Breast epithelium (tissue), 4 donors: ENCODE measurements at regions of chr2 and their contacts with region 1.

Region 1: DNA sequence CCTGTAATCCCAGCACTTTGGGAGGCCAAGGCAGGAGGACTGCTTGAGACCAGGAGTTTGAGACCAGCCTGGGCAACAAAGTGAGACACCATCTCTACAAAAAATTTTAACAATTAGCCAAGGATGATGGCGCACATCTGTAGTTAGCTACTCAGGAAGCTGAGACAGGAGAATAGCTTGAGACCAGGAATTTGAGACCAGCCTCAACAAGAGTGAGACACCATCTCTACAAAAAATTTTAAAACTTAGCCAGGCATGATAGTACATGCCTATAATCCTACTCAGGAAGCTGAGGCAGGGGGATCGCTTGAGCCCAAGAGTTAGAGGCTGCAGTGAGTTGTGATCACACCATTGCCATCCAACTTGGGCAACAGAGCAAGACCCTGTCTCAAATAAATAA is 7.0 kb downstream of the MEMO1 start:
- DNase-seq: no peak
- H3K4me3 ChIP-seq: no peak overlapping the region
- H3K27ac ChIP-seq: no peak overlapping the region
- H3K4me1 ChIP-seq: peaks cover 0 to 4% of the 10 kb centered on the region in 2 donors
- H3K27me3 ChIP-seq: no peaks in the 10 kb centered on the region
- CTCF ChIP-seq: no peak
- POLR2A ChIP-seq: no peak

Region 2: GRCh38 chr2:30261695-30262211 is 1742.0 kb before region 1 on chr2:
- intact Hi-C with region 1: loop called (anchors 5 kb)
- DNase-seq: no peak
- H3K4me3 ChIP-seq: no peak overlapping the region
- H3K27ac ChIP-seq: no peak overlapping the region
- H3K4me1 ChIP-seq: no peaks in the 10 kb centered on the region
- H3K27me3 ChIP-seq: no peaks in the 10 kb centered on the region
- CTCF ChIP-seq: no peak
- POLR2A ChIP-seq: no peak

Region 3: DNA sequence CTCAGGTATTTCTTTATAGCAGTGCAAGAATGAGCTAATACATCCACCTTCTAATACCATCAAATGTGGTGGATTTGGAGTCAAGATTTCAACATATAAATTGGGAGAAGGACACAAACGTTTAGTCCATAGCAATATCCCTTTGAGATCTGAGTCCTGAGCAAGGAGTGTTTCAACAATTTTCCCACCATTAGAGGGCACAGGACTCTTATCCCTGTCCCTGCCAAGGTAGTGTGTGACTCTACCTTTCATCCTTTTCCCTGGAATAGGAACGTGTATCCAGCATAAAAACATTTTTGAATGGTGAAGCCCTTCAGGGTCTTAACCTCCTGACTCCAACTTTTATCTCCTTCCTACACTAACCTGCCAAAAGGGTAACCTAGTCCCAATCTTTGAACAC is 241.7 kb before region 1 on chr2:
- intact Hi-C with region 1: no loop called
- DNase-seq: no peak
- H3K4me3 ChIP-seq: no peak overlapping the region
- H3K27ac ChIP-seq: no peak overlapping the region
- H3K4me1 ChIP-seq: no peaks in the 10 kb centered on the region
- H3K27me3 ChIP-seq: no peaks in the 10 kb centered on the region
- CTCF ChIP-seq: no peak
- POLR2A ChIP-seq: no peak

Region 4: DNA sequence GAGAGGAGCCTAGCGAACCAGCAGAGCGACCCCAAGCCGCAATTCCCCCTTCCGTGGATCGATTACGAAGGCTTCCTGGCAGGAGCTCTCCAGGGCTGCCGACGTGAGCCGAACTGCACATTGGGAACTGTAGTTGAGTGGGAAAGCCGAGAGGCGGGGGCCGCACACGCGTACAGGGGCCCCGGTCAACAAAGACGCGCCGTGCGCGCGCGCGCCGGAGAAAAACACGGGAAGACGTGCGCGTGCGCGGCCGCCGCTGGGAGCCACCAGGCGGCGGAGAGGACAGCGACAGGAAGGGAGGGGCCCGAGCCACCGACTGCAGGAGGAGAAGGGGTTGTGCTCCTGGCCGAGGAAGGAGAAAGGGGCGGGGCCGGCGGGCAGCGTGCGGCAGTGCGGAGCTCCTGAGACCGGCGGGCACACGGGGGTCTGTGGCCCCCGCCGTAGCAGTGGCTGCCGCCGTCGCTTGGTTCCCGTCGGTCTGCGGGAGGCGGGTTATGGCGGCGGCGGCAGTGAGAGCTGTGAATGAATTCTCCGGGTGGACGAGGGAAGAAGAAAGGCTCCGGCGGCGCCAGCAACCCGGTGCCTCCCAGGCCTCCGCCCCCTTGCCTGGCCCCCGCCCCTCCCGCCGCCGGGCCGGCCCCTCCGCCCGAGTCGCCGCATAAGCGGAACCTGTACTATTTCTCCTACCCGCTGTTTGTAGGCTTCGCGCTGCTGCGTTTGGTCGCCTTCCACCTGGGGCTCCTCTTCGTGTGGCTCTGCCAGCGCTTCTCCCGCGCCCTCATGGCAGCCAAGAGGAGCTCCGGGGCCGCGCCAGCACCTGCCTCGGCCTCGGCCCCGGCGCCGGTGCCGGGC is 59.7 kb after region 1 on chr2 and contains the start of gene SPAST:
- intact Hi-C with region 1: no loop called
- DNase-seq: peak; percentile 95
- H3K4me3 ChIP-seq: peak within 1 kb of the TSS; percentile 85
- H3K27ac ChIP-seq: peak within 1 kb of the TSS; percentile 85
- H3K4me1 ChIP-seq: no peaks in the 10 kb centered on the region
- H3K27me3 ChIP-seq: no peaks in the 10 kb centered on the region
- CTCF ChIP-seq: peak; percentile 31 to 90 (median 87)
- POLR2A ChIP-seq: peak; percentile 53
- total RNA-seq, gene SPAST: 16.3 to 30.9 (median 21.3) TPM